Activated T-helper 2 cell treated with anti-CD3 and anti-CD28 coated beads, Interferon-gamma antibody, Interleukin-2, Interleukin-4, amounts not matched to agents 10 μg/mL and 5 μg/mL and 100 μg/mL, durations not matched to agents 14 hours and 24 hours and 36 hours (primary cell): ENCODE measurements at regions of chr15 and their contacts with region 1.

Region 1: DNA sequence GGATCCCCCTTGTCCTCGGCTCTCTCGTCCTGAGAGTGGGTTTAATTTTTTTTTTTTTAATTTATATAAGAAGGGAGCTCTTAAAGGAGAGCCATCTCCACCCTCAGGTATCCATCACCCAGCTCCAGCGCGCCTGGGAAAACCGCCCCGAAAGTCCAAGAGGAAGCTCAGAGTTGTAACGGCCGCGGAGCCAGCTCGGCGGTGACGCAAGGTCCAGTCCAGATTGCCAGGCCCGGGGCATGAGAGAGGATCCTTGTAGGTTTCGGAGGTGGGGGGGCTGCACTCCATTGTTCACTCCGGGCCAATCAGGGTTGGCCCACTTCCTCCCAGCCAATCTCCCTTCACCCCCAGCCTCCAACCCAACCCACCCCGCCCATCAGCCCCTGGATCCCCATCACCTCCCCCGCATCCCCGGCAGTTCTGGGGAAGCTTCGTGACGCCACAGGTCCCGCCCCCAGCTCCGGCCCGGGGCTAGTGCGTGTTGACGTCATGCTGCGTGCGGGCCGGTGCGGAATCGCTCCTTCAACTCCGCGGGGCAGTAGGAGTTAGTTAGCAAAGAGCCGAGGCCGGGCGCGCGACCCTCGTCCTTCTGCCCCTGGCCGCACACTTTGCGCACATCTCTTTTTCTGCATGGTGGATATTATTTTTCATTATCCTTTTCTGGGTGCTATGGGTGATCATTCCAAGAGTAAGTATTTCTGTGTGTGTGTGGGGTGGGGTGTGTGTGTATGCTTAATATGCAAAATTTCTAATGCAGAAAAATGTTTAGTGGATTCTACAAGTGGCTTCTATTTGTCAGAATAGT is at the start of gene ISL2:
- DNase-seq: peak; percentile 74
- H3K4me3 Mint-ChIP-seq: peak within 1 kb of the TSS; percentile 85
- H3K27ac Mint-ChIP-seq: peak within 1 kb of the TSS; percentile 67
- H3K4me1 Mint-ChIP-seq: peaks cover 35% of the 10 kb centered on the region
- H3K27me3 Mint-ChIP-seq: peaks cover 52% of the 10 kb centered on the region
- total RNA-seq, gene ISL2: 1.4 and 1.8 TPM in 2 replicates

Region 2: DNA sequence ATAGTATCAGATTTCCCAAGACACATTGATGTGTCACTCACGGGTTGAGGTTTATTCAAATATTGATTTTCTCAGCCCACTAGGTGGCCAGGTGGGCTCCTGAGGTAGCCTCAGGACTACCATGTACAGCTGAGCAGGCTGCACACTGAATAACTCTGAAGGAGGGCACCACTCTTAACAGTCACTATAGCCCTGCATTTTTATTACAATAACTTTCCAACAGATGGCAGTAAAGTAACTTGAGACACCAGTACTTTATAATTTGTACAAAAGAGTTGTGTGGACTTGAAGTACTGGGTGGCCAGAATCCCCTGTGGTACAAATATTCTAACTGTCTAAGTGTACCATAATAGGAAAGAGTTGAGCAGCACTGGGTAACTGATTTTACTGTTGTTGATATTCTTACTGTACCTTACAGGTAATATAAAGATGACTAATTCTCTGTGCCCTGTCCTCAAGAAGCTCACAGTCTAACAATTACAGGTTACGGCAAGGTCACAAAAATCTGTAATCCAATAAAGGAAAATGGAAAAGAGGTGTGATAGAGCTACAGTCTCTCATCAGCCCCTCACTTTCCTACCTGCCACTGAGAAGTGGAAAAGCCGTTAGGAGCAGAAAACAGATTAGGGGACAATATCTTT is 101.2 kb before region 1 on chr15:
- intact Hi-C with region 1: loop called (anchors 2 kb)
- DNase-seq: no peak
- H3K4me3 Mint-ChIP-seq: no peak overlapping the region
- H3K27ac Mint-ChIP-seq: no peak overlapping the region
- H3K4me1 Mint-ChIP-seq: no peaks in the 10 kb centered on the region
- H3K27me3 Mint-ChIP-seq: no peaks in the 10 kb centered on the region

Region 3: DNA sequence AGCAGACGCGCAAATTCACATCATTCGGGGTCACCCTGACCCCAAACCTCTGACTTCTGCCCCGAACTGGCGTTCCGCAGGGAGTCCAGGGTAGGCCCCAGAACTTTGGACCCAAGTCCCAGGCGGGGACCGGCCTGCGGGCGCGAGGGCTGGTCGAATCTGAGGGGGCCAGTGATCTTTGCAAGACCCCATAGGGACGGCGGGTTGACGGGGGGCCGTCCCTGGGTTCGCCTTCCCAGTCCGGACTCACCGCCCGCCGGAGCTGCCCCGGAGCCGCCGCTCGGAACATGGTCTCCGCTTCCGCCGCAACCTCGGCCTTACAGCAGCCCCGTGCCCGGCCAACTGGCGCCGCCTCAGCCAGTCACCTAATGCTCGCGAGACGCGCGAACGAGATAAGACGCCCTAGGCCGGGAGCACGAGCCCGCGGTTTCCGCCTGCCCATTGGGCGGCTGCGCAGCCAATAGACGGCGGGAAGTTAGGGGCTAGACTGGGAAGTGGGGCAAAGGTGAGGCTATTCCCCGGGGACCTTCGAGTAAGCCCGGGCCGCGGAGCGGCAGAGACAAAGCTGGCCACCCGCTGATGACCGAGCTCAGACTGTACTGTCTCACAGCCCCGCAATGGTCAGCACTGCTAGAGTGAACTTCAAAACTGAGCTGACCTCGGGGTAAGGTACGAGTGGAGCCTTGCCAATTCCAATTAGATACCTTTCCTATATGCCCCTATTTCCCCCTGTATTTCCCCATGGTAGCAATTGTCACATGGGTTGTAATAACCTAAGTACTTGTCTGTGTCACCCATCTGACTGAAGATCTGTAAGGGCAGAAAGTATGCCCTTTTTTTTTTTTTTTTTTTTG is 25.1 kb before region 1 on chr15 and contains the start of gene ETFA:
- intact Hi-C with region 1: loop called (anchors 2 kb)
- DNase-seq: peak; percentile 90
- H3K4me3 Mint-ChIP-seq: peak within 1 kb of the TSS; percentile 84
- H3K27ac Mint-ChIP-seq: peak within 1 kb of the TSS; percentile 75
- H3K4me1 Mint-ChIP-seq: peaks cover 23% of the 10 kb centered on the region
- H3K27me3 Mint-ChIP-seq: no peaks in the 10 kb centered on the region
- total RNA-seq, gene ETFA: 157 and 160 TPM in 2 replicates